ENCODE measurements at regions of chr2 and their contacts with region 1.

Region 1: DNA sequence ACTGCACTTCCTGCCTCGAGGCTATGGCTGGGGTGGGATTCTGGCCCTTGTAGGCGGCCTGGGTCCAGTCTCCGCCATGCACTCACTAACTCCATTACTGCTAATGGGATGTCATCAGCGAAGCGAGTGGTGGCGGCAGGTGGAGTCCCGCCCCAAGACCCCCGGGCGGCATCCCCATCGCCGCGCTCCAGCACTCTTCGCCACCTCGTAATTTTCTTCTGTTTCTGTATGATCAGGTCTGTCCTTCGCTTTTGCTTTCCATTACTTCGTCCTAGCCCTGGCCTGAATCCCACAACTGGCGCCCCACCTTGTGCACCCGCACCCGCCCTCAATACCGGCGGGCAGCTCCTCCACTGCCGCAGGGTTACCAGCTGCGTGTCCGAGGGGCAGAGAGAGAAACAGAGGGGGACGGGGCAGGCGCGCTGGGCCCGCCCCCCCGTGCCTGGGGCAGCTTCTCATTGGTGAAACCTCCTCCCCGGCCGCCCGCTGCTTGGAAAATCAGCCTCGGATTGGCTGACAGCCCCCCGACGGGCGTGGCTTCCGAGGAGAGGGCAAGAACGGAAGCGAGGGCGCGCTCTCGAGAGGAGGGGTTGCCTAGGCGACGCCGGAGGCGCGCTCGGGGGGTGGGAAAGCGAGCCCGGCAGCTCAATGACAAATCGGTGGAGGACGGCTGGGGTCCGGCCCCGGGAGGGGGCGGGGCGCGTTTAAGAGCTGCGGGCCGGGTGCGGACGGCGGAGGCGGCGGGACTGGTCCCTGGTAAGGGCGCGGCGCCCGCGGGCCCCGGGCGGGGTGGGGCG is at the start of gene RALB:
- DNase-seq: peak; percentile 98 to 100
- H3K4me3 ChIP-seq: peak within 1 kb of the TSS; percentile 83 to 85
- H3K27ac ChIP-seq: peak within 1 kb of the TSS; percentile 65 to 88
- H3K4me1 ChIP-seq: peaks cover 0 to under 1% of the 10 kb centered on the region in 2 donors
- H3K27me3 ChIP-seq: no peaks in the 10 kb centered on the region
- CTCF ChIP-seq: no peak
- total RNA-seq, gene RALB: 21.7 TPM

Region 2: DNA sequence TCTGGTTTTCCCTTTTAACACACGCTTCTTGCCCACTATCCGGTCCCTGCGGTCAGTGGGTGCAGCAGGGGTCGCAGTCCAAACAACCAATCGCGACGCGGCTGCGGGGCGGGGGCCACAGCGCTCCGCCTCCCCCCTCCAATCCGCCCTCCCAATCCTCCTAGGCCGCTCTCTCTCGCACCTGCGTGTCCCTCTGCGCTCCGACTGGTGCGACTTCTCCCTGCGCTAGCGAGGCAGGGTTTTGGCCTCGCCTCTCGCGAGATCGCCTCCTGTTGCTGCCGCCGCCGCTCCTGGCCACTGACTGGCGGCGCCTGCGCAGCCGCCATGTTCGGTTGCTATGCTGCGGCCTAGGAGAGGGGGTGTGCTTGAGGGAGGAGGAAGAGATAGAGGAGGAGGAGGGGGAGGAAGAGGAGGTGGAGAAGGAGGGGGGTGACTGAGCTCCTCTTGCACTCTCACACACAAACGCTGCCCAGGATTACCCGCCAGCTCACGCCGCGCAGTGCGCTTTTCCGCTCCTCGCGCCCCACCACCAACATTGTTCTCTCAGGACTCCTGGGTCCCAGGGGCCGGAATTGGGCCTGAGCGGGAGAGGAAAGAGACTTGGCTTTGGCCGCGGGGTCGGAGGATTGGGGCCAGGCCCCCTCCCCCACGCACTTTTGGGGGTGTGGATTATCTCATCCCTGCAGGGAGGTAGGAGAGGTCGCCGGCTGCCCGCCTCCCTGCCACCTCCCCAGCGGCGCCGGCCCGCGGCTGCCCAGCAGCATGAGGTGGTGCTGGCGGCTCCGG is 492.8 kb before region 1 on chr2 and contains the start of gene PTPN4:
- intact Hi-C with region 1: loop called (anchors 2 kb)
- DNase-seq: peak; percentile 90 to 98
- H3K4me3 ChIP-seq: peak within 1 kb of the TSS; percentile 75 to 92
- H3K27ac ChIP-seq: peak within 1 kb of the TSS; percentile 84 to 90
- H3K4me1 ChIP-seq: peaks cover 0 to 14% of the 10 kb centered on the region in 2 donors
- H3K27me3 ChIP-seq: no peaks in the 10 kb centered on the region
- CTCF ChIP-seq: no peak
- total RNA-seq, gene PTPN4: 35.9 TPM

Region 3: DNA sequence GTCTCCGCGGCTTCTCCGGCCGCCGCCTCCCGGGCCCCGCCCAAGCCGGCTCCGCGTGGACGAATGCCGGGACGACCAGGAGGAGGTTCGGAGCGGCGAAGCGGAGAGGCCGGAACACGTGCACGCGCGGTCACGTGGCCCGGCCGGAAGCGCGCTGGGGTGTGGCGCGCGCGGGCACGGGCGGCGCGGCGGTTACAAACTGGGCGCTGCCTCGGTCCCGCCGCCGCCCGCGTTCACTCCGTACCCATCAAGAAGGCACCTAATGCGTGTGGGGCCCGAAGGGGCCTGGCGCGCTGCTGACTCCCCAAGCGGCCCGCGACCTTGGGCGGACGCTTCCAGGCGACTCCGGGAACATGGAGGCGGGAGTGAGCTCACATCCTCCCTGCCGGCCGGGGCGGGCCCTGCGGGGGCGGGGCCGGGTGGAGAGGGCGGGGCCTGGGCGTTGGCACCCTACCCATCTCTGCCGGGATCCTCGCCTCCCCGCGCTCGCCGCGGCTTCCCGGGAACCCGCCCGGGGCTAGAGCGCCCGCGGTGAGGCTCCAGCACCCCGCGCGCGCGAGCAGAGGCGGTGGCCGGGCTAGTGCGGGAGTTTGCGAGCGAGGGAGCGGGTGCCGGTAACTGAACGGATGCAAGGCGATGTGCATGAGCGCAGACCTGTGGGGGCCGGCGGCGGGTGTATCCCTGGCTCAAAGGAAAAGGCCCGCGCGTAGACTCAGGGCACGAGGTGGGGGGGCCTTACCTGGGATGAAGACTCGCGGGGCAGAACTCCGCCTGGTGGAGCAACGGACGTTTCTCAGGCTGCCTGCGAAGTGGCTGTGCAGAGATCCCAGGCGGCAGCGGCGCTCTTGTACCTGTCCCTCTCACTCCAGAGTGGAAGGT is 29.1 kb before region 1 on chr2 and contains the start of gene TMEM185B:
- intact Hi-C with region 1: loop called (anchors 1 kb)
- DNase-seq: peak; percentile 63 to 94
- H3K4me3 ChIP-seq: peak within 1 kb of the TSS; percentile 65 to 76
- H3K27ac ChIP-seq: peak within 1 kb of the TSS; percentile 82 to 89
- H3K4me1 ChIP-seq: peaks cover 0 to 10% of the 10 kb centered on the region in 2 donors
- H3K27me3 ChIP-seq: no peaks in the 10 kb centered on the region
- CTCF ChIP-seq: peak in 2 of 3 experiments; percentile 19 to 20
- total RNA-seq, gene TMEM185B: 31.8 TPM

Region 4: GRCh38 chr2:120312861-120313694 is 60.7 kb after region 1 on chr2:
- intact Hi-C with region 1: loop called (anchors 1 kb)
- DNase-seq: peak in 1 of 2 donors; percentile 87
- H3K4me3 ChIP-seq: peak overlapping the region; percentile 54
- H3K27ac ChIP-seq: peak overlapping the region in 1 of 2 donors; percentile 24
- H3K4me1 ChIP-seq: no peaks in the 10 kb centered on the region
- H3K27me3 ChIP-seq: no peaks in the 10 kb centered on the region
- CTCF ChIP-seq: peak; percentile 76 to 89 (median 79)

Region 5: DNA sequence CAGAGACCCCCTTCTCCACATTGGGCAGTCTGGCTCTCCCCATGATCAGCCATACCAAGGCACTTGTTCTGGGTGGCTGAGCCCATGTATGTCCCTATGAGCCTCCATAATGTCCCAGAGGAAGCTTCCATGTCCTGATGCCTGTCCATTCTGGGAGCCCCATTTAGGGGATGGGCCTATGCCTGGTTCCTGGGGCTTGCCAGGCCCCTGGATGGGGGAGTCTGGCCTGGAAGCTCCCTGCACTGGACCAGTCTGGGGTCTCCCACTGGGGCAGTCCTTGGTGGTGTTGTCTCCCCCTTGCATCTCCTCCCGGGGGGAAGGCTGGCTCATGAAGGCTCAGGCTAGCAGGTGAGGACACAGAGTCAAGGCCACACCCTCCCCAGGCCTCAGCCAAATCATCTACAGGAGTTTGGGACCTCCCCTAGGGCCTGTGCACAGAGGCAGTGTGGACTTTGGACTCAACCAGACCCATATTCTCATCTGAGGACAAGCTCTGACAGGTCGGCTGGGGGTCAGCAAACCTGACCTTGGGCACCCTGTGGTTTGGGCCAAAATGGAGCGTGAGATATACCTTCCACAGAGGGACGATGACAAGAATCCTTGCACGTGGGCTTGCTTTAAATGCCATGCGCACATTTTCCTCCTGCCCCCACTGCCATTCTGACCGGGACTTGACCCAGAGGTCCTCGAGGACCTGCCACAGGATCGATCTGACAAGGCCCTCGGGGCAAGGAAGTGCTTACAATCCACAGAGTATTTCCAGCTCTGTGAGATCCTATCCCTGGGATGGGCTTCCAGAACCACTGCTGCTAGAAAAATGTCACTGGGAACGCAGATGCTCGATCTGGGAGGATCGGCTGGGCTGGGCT is 132.3 kb after region 1 on chr2:
- intact Hi-C with region 1: no loop called
- DNase-seq: no peak
- H3K4me3 ChIP-seq: no peak overlapping the region
- H3K27ac ChIP-seq: no peak overlapping the region
- H3K4me1 ChIP-seq: no peaks in the 10 kb centered on the region
- H3K27me3 ChIP-seq: no peaks in the 10 kb centered on the region
- CTCF ChIP-seq: no peak

Region 6: DNA sequence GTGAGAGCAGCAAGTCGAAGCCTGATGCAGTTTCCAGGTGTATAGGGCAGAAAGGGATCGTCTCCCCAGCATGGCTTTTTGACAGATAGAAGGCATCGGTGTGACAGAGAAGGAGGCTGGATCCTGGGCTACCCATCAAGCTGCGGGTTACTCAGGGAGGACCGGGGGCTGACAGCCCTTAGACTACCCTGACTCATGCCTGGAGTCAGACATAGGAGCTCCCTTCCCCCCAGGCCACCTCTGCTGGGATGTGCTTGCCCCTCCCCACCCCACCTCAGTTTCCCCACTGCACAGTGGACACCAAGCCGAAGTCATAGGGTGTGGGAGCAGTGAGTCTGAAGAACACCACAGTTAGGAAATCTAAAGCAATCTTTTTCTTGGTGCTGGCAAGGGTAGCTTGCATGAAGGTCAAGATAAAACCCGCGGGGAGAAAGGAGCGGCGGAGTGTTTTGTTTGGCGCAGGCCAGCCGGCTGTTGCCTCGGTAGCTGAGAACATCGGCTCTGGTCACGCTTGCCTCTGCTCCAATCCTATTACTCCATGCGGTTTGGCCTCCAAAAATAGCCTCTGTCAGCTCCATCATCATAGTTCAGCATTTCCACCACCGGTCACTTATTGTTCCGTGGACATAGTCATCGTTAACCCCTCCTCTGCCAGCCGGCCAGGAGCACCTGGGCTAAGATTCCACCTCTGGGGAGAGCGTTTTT is 314.1 kb after region 1 on chr2:
- intact Hi-C with region 1: loop called (anchors 1 kb)
- DNase-seq: peak; percentile 60 to 93
- H3K4me3 ChIP-seq: peak overlapping the region in 1 of 2 donors; percentile 49
- H3K27ac ChIP-seq: peak overlapping the region; percentile 49 to 50
- H3K4me1 ChIP-seq: peaks cover 9 to 25% of the 10 kb centered on the region in 2 donors
- H3K27me3 ChIP-seq: no peaks in the 10 kb centered on the region
- CTCF ChIP-seq: no peak

Region 7: DNA sequence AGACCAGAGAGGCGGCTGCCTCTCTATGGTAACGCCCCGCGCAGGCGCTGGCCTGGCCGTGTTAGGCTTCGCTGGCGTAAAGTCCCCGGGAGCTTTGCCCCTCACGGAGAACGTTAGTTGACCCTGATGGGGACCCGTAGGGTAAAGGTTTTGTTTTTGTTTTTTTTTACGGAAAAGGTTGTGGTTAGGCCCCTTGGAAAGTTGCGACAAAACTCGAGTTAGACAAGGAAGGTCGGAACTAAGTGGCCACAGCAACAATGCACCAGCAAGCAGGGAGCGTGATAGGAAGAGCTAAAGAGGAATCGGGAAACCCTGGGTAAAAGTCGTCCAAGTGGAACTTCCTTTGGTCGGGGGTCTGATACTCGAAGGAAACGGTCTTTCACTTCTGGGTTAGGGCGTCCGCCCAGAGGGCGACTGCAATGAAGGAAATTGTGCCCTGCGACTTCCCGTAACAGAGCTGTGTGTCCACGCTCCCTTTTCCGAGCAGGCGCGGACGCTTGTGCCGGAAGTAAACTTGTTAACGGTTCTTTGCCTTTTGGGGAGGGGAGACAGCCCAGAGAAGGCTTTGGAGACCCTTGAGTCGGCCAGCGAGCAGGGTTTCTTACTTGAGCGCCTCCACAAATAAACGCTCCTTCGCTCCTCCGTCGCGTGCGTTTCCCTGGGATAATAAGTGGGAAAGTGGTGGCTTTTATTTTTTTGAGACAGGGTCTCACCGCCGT is 1397.3 kb after region 1 on chr2:
- intact Hi-C with region 1: loop called (anchors 10 kb)
- DNase-seq: peak; percentile 90 to 98
- H3K4me3 ChIP-seq: peak overlapping the region; percentile 54 to 84
- H3K27ac ChIP-seq: peak overlapping the region; percentile 88 to 96
- H3K4me1 ChIP-seq: peaks cover 0 to 12% of the 10 kb centered on the region in 2 donors
- H3K27me3 ChIP-seq: no peaks in the 10 kb centered on the region
- CTCF ChIP-seq: no peak

Measured in ascending aorta (tissue), 2 donors.